Left ventricle myocardium inferior (tissue), 1 donor: ENCODE measurements at regions of chr10 and their contacts with region 1.

Region 1: GRCh38 chr10:73644015-73644743 is 2.9 kb upstream of the MYOZ1 start:
- DNase-seq: no peak
- H3K4me3 ChIP-seq: no peak overlapping the region
- H3K27ac ChIP-seq: peak overlapping the region; percentile 94
- H3K4me1 ChIP-seq: peaks cover 44% of the 10 kb centered on the region
- H3K27me3 ChIP-seq: no peaks in the 10 kb centered on the region
- CTCF ChIP-seq: peak; percentile 87

Region 2: DNA sequence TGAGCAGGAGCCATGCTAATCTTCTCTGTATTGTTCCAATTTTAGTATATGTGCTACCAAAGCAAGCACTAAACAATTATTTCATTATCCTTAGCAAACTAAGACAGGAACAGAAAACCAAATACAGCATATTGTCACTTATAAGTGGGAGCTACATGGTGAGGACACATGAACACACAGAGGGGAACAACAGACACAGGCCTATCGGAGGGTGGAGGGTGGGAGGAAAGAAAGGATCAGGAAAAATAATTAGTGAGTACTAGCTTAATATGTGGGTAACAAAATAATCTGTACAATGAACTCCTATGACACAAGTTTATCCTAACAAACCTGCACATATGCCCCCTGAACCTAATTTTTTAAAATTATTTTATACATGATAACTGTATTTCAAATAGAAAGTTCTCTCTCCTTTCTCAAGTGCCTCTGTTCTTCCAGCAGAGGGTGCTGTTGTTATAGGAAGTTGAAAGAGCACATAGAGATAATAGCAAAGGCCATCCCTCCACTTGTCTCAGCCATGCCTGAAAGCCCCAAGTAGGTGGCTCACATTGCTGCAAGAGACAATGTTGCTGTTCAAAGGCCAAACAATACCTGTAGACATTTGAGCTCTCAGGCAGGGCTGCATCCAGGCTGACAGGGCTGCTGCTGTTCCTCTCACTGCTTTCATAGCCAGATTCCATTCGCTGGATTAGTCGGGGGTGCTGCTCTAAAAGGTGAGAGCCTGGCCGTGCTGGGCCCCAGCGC is 114.9 kb before region 1 on chr10:
- intact Hi-C with region 1: loop called (anchors 2 kb)
- DNase-seq: no peak
- H3K4me3 ChIP-seq: no peak overlapping the region
- H3K27ac ChIP-seq: no peak overlapping the region
- H3K4me1 ChIP-seq: no peaks in the 10 kb centered on the region
- H3K27me3 ChIP-seq: no peaks in the 10 kb centered on the region
- CTCF ChIP-seq: peak; percentile 92